H1 (cell line): ENCODE measurements at regions of chr7 and their contacts with region 1.

Region 1: DNA sequence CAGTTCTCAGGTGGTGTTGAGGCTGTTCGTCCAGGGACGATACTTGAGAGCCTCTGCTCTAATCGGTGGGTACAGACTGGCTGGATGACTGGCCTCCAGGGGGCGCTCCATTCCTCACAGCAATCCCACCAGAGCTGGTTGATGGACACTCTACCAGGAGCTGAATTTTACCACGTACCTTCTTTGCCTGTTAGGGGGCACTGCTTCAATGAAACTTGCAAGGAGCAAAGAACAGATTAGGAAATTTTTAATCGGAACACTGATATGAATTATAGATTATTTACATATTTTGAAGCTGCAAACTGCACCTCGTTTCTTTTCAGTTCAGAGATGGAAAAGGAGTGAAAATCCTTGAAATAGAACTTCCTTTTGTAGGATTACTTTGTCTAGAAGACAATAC is 44.9 kb downstream of the KBTBD2 start:
- DNase-seq: peak; percentile 76 to 95
- H3K4me3 ChIP-seq: no peak overlapping the region
- H3K27ac ChIP-seq: no peak overlapping the region
- H3K4me1 ChIP-seq: peaks cover 0 to 3% (median 0%) of the 10 kb centered on the region in 4 experiments; a peak in 2 of 7 replicates
- H3K27me3 ChIP-seq: no peaks in the 10 kb centered on the region
- CTCF ChIP-seq: peak; percentile 81 to 97 (median 86)
- EP300 ChIP-seq: no peak
- POLR2A ChIP-seq: no peak
- RAD21 ChIP-seq: peak; percentile 70 to 76

Region 2: DNA sequence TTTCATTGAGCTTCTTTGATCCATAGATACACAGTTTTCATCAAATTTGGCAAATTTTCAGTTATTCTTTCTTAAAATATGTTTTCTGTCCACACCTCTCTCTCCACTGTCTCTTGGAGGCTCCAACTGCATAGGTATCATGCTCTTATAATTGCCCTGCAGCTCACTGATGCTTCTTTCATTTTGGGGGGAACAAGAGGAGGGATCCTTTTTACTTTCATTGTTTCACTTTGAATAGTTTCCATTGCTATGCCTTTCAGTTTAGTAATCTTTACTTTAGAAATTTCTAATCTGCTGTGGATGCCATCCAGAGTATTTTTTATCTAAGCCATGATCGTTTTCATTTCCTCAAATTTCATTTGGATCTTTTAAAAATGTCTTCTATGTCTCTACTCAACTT is 11.9 kb after region 1 on chr7:
- CTCF ChIA-PET with region 1: interaction called, 23 read pairs
- POLR2A ChIA-PET with region 1: interaction called, 3 read pairs
- DNase-seq: no peak
- H3K4me3 ChIP-seq: no peak overlapping the region
- H3K27ac ChIP-seq: no peak overlapping the region
- H3K4me1 ChIP-seq: peaks cover 0 to 3% (median under 1%) of the 10 kb centered on the region in 4 experiments; a peak in 3 of 7 replicates
- H3K27me3 ChIP-seq: no peaks in the 10 kb centered on the region
- CTCF ChIP-seq: no peak
- EP300 ChIP-seq: no peak
- POLR2A ChIP-seq: no peak
- RAD21 ChIP-seq: no peak

Region 3: GRCh38 chr7:32891800-32892520 is 45.3 kb after region 1 on chr7:
- CTCF ChIA-PET with region 1: interaction called, 13 read pairs
- POLR2A ChIA-PET with region 1: no interaction called
- DNase-seq: peak; percentile 85 to 95
- H3K4me3 ChIP-seq: peak overlapping the region; percentile 69 to 99 (median 86)
- H3K27ac ChIP-seq: peak overlapping the region; percentile 93
- H3K4me1 ChIP-seq: peaks cover 3 to 13% (median 6%) of the 10 kb centered on the region in 4 experiments; a peak in 6 of 7 replicates
- H3K27me3 ChIP-seq: no peaks in the 10 kb centered on the region
- CTCF ChIP-seq: no peak
- EP300 ChIP-seq: no peak
- POLR2A ChIP-seq: no peak; a peak in 1 of 3 replicates
- RAD21 ChIP-seq: no peak

Region 4: GRCh38 chr7:32928785-32929298 is 82.1 kb after region 1 on chr7:
- CTCF ChIA-PET with region 1: interaction called, 18 read pairs
- POLR2A ChIA-PET with region 1: no interaction called
- DNase-seq: no peak
- H3K4me3 ChIP-seq: no peak overlapping the region
- H3K27ac ChIP-seq: no peak overlapping the region
- H3K4me1 ChIP-seq: no peaks in the 10 kb centered on the region
- H3K27me3 ChIP-seq: peaks cover 2 to 17% (median 4%) of the 10 kb centered on the region in 4 experiments; a peak in 6 of 7 replicates
- CTCF ChIP-seq: no peak
- EP300 ChIP-seq: no peak
- POLR2A ChIP-seq: no peak
- RAD21 ChIP-seq: no peak